CD8-positive, alpha-beta T cell (primary cell): ENCODE measurements at regions of chr20 and their contacts with region 1.

Region 1: DNA sequence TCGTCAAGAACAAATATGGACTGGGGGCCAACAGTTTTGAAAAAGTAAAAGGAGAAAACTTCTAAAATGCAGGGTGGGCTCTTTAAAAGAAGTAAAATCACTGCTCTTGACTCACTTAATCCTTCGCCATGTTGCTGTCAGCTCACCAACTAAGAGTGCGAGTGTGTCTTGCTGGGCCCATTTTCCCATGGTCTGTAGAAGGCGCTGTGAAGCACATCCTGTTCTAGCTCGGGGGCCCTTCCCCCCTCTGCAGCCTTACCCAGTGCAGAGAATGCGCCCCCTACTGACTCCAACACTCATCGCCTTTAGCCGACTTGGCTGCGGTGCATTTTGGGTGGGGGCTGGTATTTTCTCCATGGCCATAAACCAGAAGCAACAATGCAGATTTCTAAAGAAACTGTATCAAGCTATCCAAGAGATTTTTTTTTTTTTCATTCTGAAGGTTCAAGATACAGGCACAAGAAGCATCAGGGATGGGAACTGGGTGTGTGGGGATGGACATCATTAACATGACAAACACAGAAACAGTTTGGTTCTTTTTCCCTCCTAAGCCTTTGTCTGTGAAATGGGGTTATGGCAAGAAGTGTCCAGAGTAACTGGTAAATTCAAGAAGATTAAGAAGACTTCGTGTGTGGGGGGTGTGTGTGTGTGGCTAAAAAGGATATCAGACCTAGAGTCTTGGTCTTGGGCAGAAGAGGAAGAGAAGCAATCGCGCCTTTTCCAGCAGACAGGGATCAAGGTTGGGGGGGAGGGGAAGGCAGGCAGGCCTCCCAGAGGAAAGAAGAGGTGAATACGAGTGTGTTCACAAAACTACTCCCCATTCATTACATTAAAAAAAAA is 1.7 kb downstream of the ADNP start:
- DNase-seq: peak; percentile 80 to 97 (median 91)
- ATAC-seq: peak; percentile 71
- H3K4me3 ChIP-seq: peak overlapping the region; percentile 64 to 74
- H3K4me3 Mint-ChIP-seq: peak overlapping the region; percentile 88
- H3K27ac ChIP-seq: peak overlapping the region; percentile 48 to 53
- H3K27ac Mint-ChIP-seq: peak overlapping the region; percentile 87
- H3K4me1 ChIP-seq: peaks cover 52% of the 10 kb centered on the region
- H3K4me1 Mint-ChIP-seq: peaks cover 62% of the 10 kb centered on the region
- H3K27me3 ChIP-seq: no peaks in the 10 kb centered on the region
- H3K27me3 Mint-ChIP-seq: no peaks in the 10 kb centered on the region
- CTCF ChIP-seq: peak; percentile 91

Region 2: GRCh38 chr20:49812463-49813304 is 1116.8 kb before region 1 on chr20 and contains the start of gene SLC9A8:
- CTCF ChIA-PET with region 1: no interaction called
- POLR2A ChIA-PET with region 1: no interaction called
- intact Hi-C with region 1: loop called in 1 of 2 experiments (anchors 5 kb)
- DNase-seq: peak; percentile 63 to 96 (median 82)
- ATAC-seq: peak; percentile 88
- H3K4me3 ChIP-seq: peak within 1 kb of the TSS; percentile 79 to 90
- H3K4me3 Mint-ChIP-seq: peak within 1 kb of the TSS; percentile 95
- H3K27ac ChIP-seq: peak within 1 kb of the TSS; percentile 84 to 95
- H3K27ac Mint-ChIP-seq: peak within 1 kb of the TSS; percentile 99
- H3K4me1 ChIP-seq: peaks cover 20% of the 10 kb centered on the region
- H3K4me1 Mint-ChIP-seq: peaks cover 35% of the 10 kb centered on the region
- H3K27me3 ChIP-seq: no peaks in the 10 kb centered on the region
- H3K27me3 Mint-ChIP-seq: no peaks in the 10 kb centered on the region
- CTCF ChIP-seq: peak; percentile 14
- total RNA-seq, gene SLC9A8: 30.7 to 32.9 TPM

Region 3: GRCh38 chr20:50799890-50800655 is 129.4 kb before region 1 on chr20:
- CTCF ChIA-PET with region 1: interaction called, 119 read pairs
- POLR2A ChIA-PET with region 1: interaction called, 77 read pairs
- intact Hi-C with region 1: no loop called
- DNase-seq: no peak
- ATAC-seq: no peak
- H3K4me3 ChIP-seq: no peak overlapping the region
- H3K4me3 Mint-ChIP-seq: no peak overlapping the region
- H3K27ac ChIP-seq: no peak overlapping the region
- H3K27ac Mint-ChIP-seq: peak overlapping the region; percentile 58
- H3K4me1 ChIP-seq: peaks cover 22% of the 10 kb centered on the region
- H3K4me1 Mint-ChIP-seq: peaks cover 44% of the 10 kb centered on the region
- H3K27me3 ChIP-seq: no peaks in the 10 kb centered on the region
- H3K27me3 Mint-ChIP-seq: no peaks in the 10 kb centered on the region
- CTCF ChIP-seq: no peak

Region 4: DNA sequence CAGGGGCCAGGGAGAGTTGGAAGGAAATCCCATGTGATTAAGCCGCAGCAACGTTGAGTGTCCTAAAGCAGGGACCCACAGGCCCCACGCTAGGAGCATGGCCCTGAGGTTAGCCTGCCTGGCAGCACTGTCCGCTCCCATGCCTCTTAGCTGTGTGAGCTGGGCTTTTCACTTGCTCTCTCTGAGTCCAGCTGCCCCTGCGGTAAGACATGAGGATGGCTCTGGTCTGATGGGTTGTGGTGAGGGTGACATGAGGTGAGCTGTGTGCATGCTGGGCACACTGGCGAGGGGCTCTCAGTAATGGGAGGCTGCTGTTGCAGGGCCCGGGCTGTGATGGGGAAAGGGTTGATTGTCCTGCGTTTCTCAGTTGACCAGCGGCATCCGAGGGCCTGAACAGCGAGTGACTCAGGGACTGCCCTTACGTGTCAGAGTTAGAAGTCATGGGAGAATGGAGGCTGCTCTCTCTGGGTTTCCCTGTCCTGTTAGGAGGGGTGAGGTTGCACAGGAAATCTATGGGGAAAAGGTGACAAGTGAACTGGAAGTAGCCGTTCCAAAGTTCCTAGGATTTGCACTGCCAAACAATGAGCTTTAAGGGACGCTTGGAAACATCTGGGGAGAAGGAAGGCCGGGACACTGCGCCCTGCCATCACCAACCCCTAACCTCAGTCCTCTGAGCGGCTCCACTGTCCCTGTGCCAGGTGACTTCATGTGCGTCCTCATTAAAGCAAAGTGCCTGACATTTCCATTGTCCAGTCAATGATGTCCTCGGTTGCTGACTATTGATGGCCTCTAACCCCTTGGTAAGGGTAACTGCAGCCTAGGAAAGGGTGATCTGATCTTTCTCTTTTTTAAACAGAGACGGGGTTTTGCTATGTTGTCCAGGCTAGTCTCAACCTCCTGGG is 49.6 kb before region 1 on chr20:
- CTCF ChIA-PET with region 1: interaction called, 4 read pairs
- POLR2A ChIA-PET with region 1: interaction called, 6 read pairs
- intact Hi-C with region 1: loop called in 1 of 2 experiments (anchors 5 kb)
- DNase-seq: no peak
- ATAC-seq: no peak
- H3K4me3 ChIP-seq: no peak overlapping the region
- H3K4me3 Mint-ChIP-seq: no peak overlapping the region
- H3K27ac ChIP-seq: no peak overlapping the region
- H3K27ac Mint-ChIP-seq: no peak overlapping the region
- H3K4me1 ChIP-seq: no peaks in the 10 kb centered on the region
- H3K4me1 Mint-ChIP-seq: peaks cover 2% of the 10 kb centered on the region
- H3K27me3 ChIP-seq: no peaks in the 10 kb centered on the region
- H3K27me3 Mint-ChIP-seq: no peaks in the 10 kb centered on the region
- CTCF ChIP-seq: no peak

Region 5: DNA sequence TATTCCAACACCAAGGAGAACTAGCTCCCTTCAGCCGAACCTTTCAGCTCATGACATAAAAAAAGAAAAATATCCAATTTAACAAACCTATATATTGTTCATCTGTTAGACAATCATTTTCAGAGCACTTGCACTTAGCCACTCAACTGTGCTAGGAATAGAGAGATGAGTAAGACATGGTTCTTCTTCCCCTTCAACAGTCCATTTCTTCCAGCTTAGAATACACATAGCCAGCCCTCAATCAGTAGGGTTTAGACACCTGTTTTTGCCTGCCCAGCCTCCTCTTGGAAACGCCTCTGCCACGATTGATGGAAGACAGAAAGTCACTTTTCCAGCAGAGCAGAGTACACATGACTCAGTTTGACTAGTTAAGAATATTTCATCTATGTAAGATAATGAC is 20.1 kb before region 1 on chr20:
- CTCF ChIA-PET with region 1: interaction called, 19 read pairs
- POLR2A ChIA-PET with region 1: interaction called, 8 read pairs
- intact Hi-C with region 1: loop called in 1 of 2 experiments (anchors 2 kb)
- DNase-seq: no peak
- ATAC-seq: no peak
- H3K4me3 ChIP-seq: no peak overlapping the region
- H3K4me3 Mint-ChIP-seq: no peak overlapping the region
- H3K27ac ChIP-seq: no peak overlapping the region
- H3K27ac Mint-ChIP-seq: peak overlapping the region; percentile 84
- H3K4me1 ChIP-seq: peaks cover 39% of the 10 kb centered on the region
- H3K4me1 Mint-ChIP-seq: peaks cover 76% of the 10 kb centered on the region
- H3K27me3 ChIP-seq: no peaks in the 10 kb centered on the region
- H3K27me3 Mint-ChIP-seq: no peaks in the 10 kb centered on the region
- CTCF ChIP-seq: no peak

Region 6: GRCh38 chr20:50939711-50940110 is 10.2 kb after region 1 on chr20:
- CTCF ChIA-PET with region 1: interaction called, 10 read pairs
- POLR2A ChIA-PET with region 1: interaction called, 6 read pairs
- intact Hi-C with region 1: no loop called
- DNase-seq: no peak
- ATAC-seq: no peak
- H3K4me3 ChIP-seq: no peak overlapping the region
- H3K4me3 Mint-ChIP-seq: no peak overlapping the region
- H3K27ac ChIP-seq: no peak overlapping the region
- H3K27ac Mint-ChIP-seq: no peak overlapping the region
- H3K4me1 ChIP-seq: no peaks in the 10 kb centered on the region
- H3K4me1 Mint-ChIP-seq: no peaks in the 10 kb centered on the region
- H3K27me3 ChIP-seq: no peaks in the 10 kb centered on the region
- H3K27me3 Mint-ChIP-seq: no peaks in the 10 kb centered on the region
- CTCF ChIP-seq: no peak

Region 7: DNA sequence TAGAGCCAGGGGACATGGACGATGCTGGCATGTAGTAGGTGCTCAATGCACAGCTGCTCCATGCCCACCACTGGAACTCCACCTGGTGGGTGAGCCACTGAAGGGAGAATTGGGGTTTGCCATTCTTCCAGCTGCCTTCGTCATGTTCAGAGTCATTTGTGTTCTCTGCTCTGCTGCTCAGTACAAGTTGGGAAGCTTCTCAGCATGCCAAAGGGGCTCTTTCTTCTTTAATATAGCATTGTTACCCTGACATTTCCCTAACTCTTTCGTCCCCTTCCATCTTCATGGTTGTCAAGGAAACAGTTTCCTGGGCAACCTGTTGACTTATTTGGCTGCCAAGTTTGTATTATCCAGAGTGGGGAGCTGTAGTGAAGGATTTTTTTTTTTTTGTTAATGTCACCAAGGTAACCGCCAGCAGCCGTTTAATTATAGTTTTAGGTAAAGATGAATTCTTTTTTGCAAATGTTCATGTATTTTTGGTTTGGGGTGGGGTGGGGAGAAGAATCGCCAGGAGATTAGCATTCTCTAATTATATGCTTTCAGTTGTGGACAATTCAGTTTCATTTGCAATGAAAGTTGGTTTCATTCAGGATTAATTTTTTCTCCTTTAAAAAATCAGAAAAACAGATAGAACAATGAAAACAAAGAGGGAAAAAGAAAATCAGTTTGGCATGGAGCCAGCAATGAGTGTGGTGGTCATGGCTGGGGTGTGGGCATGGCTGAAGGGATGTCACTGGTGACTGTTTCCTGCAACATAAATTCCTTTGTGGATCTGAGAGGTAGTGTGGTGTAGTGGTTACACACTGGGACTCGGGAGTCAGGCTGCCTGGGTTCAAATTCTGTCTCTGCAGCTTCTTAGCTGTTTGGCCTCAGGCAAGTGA is 166.4 kb after region 1 on chr20:
- CTCF ChIA-PET with region 1: no interaction called
- POLR2A ChIA-PET with region 1: no interaction called
- intact Hi-C with region 1: no loop called
- DNase-seq: no peak
- ATAC-seq: no peak
- H3K4me3 ChIP-seq: no peak overlapping the region
- H3K4me3 Mint-ChIP-seq: no peak overlapping the region
- H3K27ac ChIP-seq: no peak overlapping the region
- H3K27ac Mint-ChIP-seq: no peak overlapping the region
- H3K4me1 ChIP-seq: no peaks in the 10 kb centered on the region
- H3K4me1 Mint-ChIP-seq: peaks cover 5% of the 10 kb centered on the region
- H3K27me3 ChIP-seq: no peaks in the 10 kb centered on the region
- H3K27me3 Mint-ChIP-seq: peaks cover 47% of the 10 kb centered on the region
- CTCF ChIP-seq: no peak

Region 8: DNA sequence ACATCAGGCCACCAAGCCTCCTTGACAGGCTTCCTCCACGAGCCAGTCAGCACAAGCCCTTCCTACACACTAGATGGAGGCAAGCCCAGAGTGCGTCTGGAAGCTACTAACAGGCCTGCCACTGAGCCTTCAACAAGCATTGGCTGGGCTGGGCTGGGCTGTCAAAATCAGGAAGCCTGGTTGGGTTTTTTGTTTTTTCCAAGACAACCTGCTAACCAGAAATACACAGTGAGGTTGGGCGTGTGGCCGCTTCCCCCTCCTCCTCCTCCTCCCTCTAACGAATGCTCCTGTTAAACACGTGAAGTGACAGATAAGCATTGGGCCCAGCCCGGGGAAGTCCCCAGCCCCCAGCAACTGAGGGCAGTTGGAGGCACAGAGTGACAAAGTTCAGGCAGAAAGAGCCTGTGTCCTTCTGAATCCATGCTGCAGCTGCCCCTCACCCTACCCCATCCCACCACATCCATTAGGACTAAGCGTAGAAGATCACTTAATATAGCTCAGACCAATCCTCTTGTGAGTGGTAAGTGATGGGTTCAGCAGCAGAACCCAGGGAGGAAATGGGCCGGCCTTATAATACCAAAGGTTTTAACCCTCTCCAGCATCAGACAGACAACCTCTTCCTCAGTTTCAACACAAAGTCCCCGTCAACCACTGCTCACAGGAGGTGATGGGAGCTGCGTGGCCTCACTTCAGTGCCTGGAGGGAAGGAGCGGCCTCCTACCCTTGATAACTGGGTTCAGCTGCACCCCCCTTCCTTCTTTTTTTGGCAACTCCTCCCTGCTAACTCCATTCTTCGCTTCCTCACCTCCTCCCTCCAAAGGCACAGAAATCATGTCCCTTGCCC is 611.9 kb after region 1 on chr20:
- CTCF ChIA-PET with region 1: no interaction called
- POLR2A ChIA-PET with region 1: no interaction called
- intact Hi-C with region 1: loop called in 1 of 2 experiments (anchors 5 kb)
- DNase-seq: peak; percentile 63 to 96 (median 81)
- ATAC-seq: peak; percentile 76
- H3K4me3 ChIP-seq: peak overlapping the region; percentile 57 to 82
- H3K4me3 Mint-ChIP-seq: peak overlapping the region; percentile 97
- H3K27ac ChIP-seq: peak overlapping the region; percentile 76 to 92
- H3K27ac Mint-ChIP-seq: peak overlapping the region; percentile 99
- H3K4me1 ChIP-seq: peaks cover 52% of the 10 kb centered on the region
- H3K4me1 Mint-ChIP-seq: peaks cover 57% of the 10 kb centered on the region
- H3K27me3 ChIP-seq: no peaks in the 10 kb centered on the region
- H3K27me3 Mint-ChIP-seq: no peaks in the 10 kb centered on the region
- CTCF ChIP-seq: no peak